ENCODE measurements at regions of chr5 and their contacts with region 1.

Region 1: DNA sequence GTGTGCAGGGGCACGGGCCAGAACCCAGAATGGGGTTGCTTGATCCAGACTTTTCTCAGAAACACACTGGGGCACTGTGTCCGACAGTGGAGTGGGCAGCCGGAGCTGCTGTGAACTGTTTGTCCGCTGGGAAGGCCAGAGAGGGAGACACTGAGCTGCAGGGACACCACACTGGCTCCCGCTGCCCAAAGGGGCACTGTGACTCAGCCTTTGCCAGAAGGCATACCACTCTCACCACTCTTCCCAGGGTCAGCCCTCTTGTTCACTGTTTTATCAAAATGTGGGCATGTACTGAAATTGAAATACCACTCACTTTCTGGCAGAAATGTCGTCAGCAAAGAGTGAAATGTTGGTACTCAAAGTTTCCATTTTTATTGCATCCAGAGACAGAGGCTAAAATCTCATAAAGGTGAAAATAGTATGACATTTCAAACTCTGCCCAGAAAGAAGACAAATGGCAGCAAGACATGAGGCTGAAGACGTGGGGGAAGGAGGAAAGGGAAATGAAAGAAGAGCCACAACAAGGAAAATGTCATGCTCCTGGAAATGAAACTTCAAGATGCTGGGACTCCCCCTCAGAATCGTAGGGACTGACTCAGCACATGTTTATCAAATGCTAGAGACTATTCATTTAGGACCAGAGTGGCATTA is 4.5 kb upstream of the IL7R start:
- DNase-seq: peak in 5 of 9 experiments; percentile 30 to 83 (median 42)
- ATAC-seq: no peak
- H3K4me3 ChIP-seq: peak overlapping the region; percentile 32 to 47
- H3K4me3 Mint-ChIP-seq: peak overlapping the region; percentile 88
- H3K27ac ChIP-seq: peak overlapping the region; percentile 94 to 97
- H3K27ac Mint-ChIP-seq: peak overlapping the region; percentile 100
- H3K4me1 ChIP-seq: peaks cover 64% of the 10 kb centered on the region
- H3K4me1 Mint-ChIP-seq: peaks cover 80% of the 10 kb centered on the region
- H3K27me3 ChIP-seq: no peaks in the 10 kb centered on the region
- H3K27me3 Mint-ChIP-seq: no peaks in the 10 kb centered on the region
- CTCF ChIP-seq: no peak

Region 2: DNA sequence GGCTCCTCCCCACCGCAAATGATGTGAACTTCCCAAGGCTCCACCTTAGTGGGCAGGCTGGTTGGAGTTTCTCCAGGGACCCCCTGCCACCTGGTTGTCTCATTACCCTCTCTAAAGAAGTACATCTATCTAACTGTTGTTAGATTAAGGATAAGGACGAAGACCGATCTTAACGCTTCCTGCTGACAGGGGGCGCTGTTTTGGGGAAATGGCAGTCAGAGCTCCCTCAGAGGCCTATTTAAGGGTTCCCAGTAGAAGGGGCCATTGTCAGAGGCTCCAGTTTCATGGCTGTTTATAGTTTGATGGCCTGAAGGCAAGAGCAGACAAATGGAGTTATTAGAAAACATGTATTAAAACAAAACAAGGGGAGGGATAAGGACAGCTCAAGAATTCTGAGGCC is 134.5 kb before region 1 on chr5:
- CTCF ChIA-PET with region 1: no interaction called
- POLR2A ChIA-PET with region 1: no interaction called
- intact Hi-C with region 1: no loop called
- DNase-seq: no peak
- ATAC-seq: no peak
- H3K4me3 ChIP-seq: no peak overlapping the region
- H3K4me3 Mint-ChIP-seq: no peak overlapping the region
- H3K27ac ChIP-seq: no peak overlapping the region
- H3K27ac Mint-ChIP-seq: no peak overlapping the region
- H3K4me1 ChIP-seq: no peaks in the 10 kb centered on the region
- H3K4me1 Mint-ChIP-seq: peaks cover 5% of the 10 kb centered on the region
- H3K27me3 ChIP-seq: no peaks in the 10 kb centered on the region
- H3K27me3 Mint-ChIP-seq: no peaks in the 10 kb centered on the region
- CTCF ChIP-seq: no peak

Region 3: GRCh38 chr5:35777358-35778087 is 74.7 kb before region 1 on chr5:
- CTCF ChIA-PET with region 1: interaction called, 144 read pairs
- POLR2A ChIA-PET with region 1: interaction called, 192 read pairs
- intact Hi-C with region 1: loop called (anchors 1 to 2 kb)
- DNase-seq: peak; percentile 40 to 88 (median 81)
- ATAC-seq: peak; percentile 64
- H3K4me3 ChIP-seq: no peak overlapping the region
- H3K4me3 Mint-ChIP-seq: peak overlapping the region; percentile 58
- H3K27ac ChIP-seq: no peak overlapping the region
- H3K27ac Mint-ChIP-seq: peak overlapping the region; percentile 92
- H3K4me1 ChIP-seq: peaks cover 58% of the 10 kb centered on the region
- H3K4me1 Mint-ChIP-seq: peaks cover 68% of the 10 kb centered on the region
- H3K27me3 ChIP-seq: no peaks in the 10 kb centered on the region
- H3K27me3 Mint-ChIP-seq: no peaks in the 10 kb centered on the region
- CTCF ChIP-seq: peak; percentile 79

Region 4: DNA sequence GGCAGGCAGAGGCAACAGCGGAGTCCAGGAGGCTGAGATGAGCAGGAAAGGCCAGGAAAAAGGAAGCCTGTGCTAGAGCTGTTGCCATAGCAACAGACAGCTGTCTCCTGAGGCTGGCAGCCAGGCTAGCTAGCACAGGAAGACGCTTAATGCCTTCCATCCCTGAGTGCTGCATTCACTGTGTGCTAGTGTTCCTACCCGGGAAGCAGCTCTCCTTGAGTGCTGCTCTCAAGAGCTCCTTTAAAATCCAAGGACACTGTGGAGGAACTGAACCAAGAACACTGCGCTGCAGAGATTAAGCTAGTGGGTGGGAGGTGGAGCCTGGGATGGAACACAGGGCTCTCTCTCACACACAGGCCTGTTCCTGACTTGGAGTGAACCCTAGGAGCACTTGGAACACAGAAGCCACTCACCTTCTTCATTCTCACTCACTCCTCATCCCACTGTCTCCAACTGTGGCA is 49.0 kb before region 1 on chr5:
- CTCF ChIA-PET with region 1: interaction called, 3 read pairs
- POLR2A ChIA-PET with region 1: interaction called, 15 read pairs
- intact Hi-C with region 1: no loop called
- DNase-seq: peak in 2 of 9 experiments; percentile 47 to 69
- ATAC-seq: peak; percentile 48
- H3K4me3 ChIP-seq: no peak overlapping the region
- H3K4me3 Mint-ChIP-seq: peak overlapping the region; percentile 6
- H3K27ac ChIP-seq: no peak overlapping the region
- H3K27ac Mint-ChIP-seq: peak overlapping the region; percentile 75
- H3K4me1 ChIP-seq: peaks cover 37% of the 10 kb centered on the region
- H3K4me1 Mint-ChIP-seq: peaks cover 64% of the 10 kb centered on the region
- H3K27me3 ChIP-seq: no peaks in the 10 kb centered on the region
- H3K27me3 Mint-ChIP-seq: no peaks in the 10 kb centered on the region
- CTCF ChIP-seq: no peak

Region 5: GRCh38 chr5:35822511-35822910 is 29.7 kb before region 1 on chr5:
- CTCF ChIA-PET with region 1: interaction called, 94 read pairs
- POLR2A ChIA-PET with region 1: interaction called, 700 read pairs
- intact Hi-C with region 1: loop called in 1 of 2 experiments (anchors 2 kb)
- DNase-seq: peak; percentile 22 to 84 (median 63)
- ATAC-seq: peak; percentile 74
- H3K4me3 ChIP-seq: no peak overlapping the region
- H3K4me3 Mint-ChIP-seq: peak overlapping the region; percentile 58
- H3K27ac ChIP-seq: peak overlapping the region; percentile 12 to 34
- H3K27ac Mint-ChIP-seq: peak overlapping the region; percentile 94
- H3K4me1 ChIP-seq: peaks cover 93% of the 10 kb centered on the region
- H3K4me1 Mint-ChIP-seq: peaks cover 90% of the 10 kb centered on the region
- H3K27me3 ChIP-seq: no peaks in the 10 kb centered on the region
- H3K27me3 Mint-ChIP-seq: no peaks in the 10 kb centered on the region
- CTCF ChIP-seq: no peak

Region 6: DNA sequence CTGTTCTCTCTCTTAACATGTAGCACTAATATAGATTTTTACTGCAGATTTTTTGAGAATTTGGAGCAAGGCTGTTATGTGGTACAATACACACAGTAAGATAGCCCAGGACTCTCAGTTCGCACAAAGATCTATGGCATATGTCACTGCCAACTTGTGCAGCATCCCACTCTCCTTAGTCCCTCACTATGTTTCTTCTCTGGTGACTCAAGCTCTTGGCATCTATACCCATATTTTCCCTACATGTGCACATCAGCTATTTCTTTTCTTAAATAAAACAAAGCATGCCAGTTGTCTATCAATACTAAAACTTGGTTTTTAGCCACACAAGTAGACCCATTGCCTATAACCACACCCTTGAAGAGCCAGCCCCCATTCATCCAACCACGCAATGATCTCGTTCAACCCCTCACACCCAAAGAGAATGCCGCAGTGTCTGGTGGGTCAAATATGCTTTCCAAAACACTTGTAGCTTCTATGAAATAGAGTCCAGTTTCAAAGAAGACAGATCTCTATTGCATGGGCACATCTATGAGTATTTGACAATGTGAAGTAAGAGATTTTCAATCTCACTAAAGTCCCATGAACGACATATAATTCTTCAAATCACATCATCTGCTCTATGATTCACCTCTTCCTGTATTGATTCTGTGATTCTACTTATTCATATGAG is 13.7 kb before region 1 on chr5:
- CTCF ChIA-PET with region 1: interaction called, 5 read pairs
- POLR2A ChIA-PET with region 1: interaction called, 700 read pairs
- intact Hi-C with region 1: loop called (anchors 1 to 2 kb)
- DNase-seq: no peak
- ATAC-seq: no peak
- H3K4me3 ChIP-seq: no peak overlapping the region
- H3K4me3 Mint-ChIP-seq: no peak overlapping the region
- H3K27ac ChIP-seq: no peak overlapping the region
- H3K27ac Mint-ChIP-seq: peak overlapping the region; percentile 77
- H3K4me1 ChIP-seq: peaks cover 59% of the 10 kb centered on the region
- H3K4me1 Mint-ChIP-seq: peaks cover 68% of the 10 kb centered on the region
- H3K27me3 ChIP-seq: no peaks in the 10 kb centered on the region
- H3K27me3 Mint-ChIP-seq: no peaks in the 10 kb centered on the region
- CTCF ChIP-seq: no peak

Region 7: GRCh38 chr5:35869685-35870277 is 17.6 kb after region 1 on chr5:
- CTCF ChIA-PET with region 1: interaction called, 5 read pairs
- POLR2A ChIA-PET with region 1: interaction called, 50 read pairs
- intact Hi-C with region 1: loop called in 1 of 2 experiments (anchors 2 kb)
- DNase-seq: no peak
- ATAC-seq: peak; percentile 30
- H3K4me3 ChIP-seq: no peak overlapping the region
- H3K4me3 Mint-ChIP-seq: no peak overlapping the region
- H3K27ac ChIP-seq: peak overlapping the region in 1 of 2 experiments; percentile 17
- H3K27ac Mint-ChIP-seq: peak overlapping the region; percentile 85
- H3K4me1 ChIP-seq: peaks cover 61% of the 10 kb centered on the region
- H3K4me1 Mint-ChIP-seq: peaks cover 87% of the 10 kb centered on the region
- H3K27me3 ChIP-seq: no peaks in the 10 kb centered on the region
- H3K27me3 Mint-ChIP-seq: no peaks in the 10 kb centered on the region
- CTCF ChIP-seq: no peak

Region 8: DNA sequence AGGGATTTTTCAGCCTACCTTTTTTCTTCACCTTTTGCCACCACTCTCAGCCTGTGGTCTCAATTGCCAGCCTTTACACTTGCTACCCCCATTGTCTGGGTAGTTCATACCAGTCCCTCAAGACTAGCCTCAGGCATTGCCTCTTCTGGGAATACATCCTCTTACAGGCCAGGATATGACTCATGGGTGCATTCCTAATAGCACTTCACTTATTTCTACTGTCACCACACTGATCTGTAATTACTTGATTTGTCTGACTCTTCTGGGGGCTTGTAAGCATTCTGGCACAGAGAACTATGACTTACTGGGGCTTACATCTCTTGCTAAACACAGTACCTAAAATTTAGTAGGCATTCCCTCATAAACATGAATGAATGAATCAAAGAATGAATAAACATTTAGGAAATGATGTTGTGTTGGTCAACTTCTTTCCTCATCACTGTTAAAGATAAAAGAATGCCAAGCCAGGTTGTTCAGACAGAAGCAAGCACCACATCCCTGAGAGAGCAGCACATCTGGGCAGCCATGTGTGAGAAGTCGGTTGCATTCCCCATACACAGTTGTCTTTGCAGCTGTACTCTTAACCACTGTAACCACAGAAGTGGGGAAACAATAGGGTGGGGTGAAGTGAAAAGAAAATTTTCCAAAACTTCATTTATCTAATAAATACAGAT is 32.0 kb after region 1 on chr5:
- CTCF ChIA-PET with region 1: interaction called, 6 read pairs
- POLR2A ChIA-PET with region 1: interaction called, 75 read pairs
- intact Hi-C with region 1: no loop called
- DNase-seq: peak in 2 of 9 experiments; percentile 35 to 57
- ATAC-seq: peak; percentile 47
- H3K4me3 ChIP-seq: no peak overlapping the region
- H3K4me3 Mint-ChIP-seq: peak overlapping the region; percentile 3
- H3K27ac ChIP-seq: peak overlapping the region in 1 of 2 experiments; percentile 44
- H3K27ac Mint-ChIP-seq: peak overlapping the region; percentile 89
- H3K4me1 ChIP-seq: peaks cover 26% of the 10 kb centered on the region
- H3K4me1 Mint-ChIP-seq: peaks cover 47% of the 10 kb centered on the region
- H3K27me3 ChIP-seq: no peaks in the 10 kb centered on the region
- H3K27me3 Mint-ChIP-seq: no peaks in the 10 kb centered on the region
- CTCF ChIP-seq: no peak